Caco-2 (cell line): ENCODE measurements at regions of chr7 and their contacts with region 1.

Region 1: GRCh38 chr7:52311886-52312285 is 723.5 kb upstream of the POM121L12 start:
- DNase-seq: peak; percentile 14 to 40
- H3K4me3 ChIP-seq: no peak overlapping the region
- H3K4me3 Mint-ChIP-seq: no peak overlapping the region
- H3K27ac Mint-ChIP-seq: no peak overlapping the region
- H3K4me1 ChIP-seq: 0 out of 2 replicates have a peak, but pooled peaks cover 4% of the 10 kb centered on the region
- H3K4me1 Mint-ChIP-seq: no peaks in the 10 kb centered on the region
- H3K27me3 ChIP-seq: no peaks in the 10 kb centered on the region
- H3K27me3 Mint-ChIP-seq: no peaks in the 10 kb centered on the region
- CTCF ChIP-seq: no peak

Region 2: DNA sequence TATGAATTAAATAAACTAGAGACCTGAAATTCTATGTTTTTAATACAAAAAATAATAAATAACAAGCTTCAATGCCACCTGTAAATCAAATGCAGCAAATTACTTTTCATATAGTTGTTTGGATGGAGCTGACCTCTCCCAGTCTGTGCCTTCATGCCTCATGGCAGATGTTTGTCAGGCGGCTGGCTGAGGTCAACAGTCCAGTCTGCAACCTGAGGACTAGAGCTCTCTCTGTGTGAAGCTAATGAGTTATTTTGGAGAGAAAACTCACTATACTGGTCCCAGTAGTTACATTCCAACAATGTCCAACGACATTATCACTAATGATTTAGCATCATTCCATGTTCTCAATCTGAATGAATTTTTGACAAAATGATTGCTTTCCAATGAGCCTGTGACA is 22.6 kb before region 1 on chr7:
- CTCF ChIA-PET with region 1: no interaction called
- POLR2A ChIA-PET with region 1: no interaction called
- intact Hi-C with region 1: loop called (anchors 1 kb)
- DNase-seq: no peak
- H3K4me3 ChIP-seq: no peak overlapping the region
- H3K4me3 Mint-ChIP-seq: no peak overlapping the region
- H3K27ac Mint-ChIP-seq: no peak overlapping the region
- H3K4me1 ChIP-seq: no peaks in the 10 kb centered on the region
- H3K4me1 Mint-ChIP-seq: no peaks in the 10 kb centered on the region
- H3K27me3 ChIP-seq: no peaks in the 10 kb centered on the region
- H3K27me3 Mint-ChIP-seq: no peaks in the 10 kb centered on the region
- CTCF ChIP-seq: no peak